Tibial artery (tissue), 4 donors: ENCODE measurements at regions of chrX and their contacts with region 1.

Region 1: GRCh38 chrX:120499301-120500072 is 30.4 kb upstream of the LAMP2 start:
- DNase-seq: no peak
- H3K4me3 ChIP-seq: no peak overlapping the region
- H3K27ac ChIP-seq: no peak overlapping the region
- H3K4me1 ChIP-seq: no peaks in the 10 kb centered on the region
- H3K27me3 ChIP-seq: no peaks in the 10 kb centered on the region
- CTCF ChIP-seq: no peak

Region 2: DNA sequence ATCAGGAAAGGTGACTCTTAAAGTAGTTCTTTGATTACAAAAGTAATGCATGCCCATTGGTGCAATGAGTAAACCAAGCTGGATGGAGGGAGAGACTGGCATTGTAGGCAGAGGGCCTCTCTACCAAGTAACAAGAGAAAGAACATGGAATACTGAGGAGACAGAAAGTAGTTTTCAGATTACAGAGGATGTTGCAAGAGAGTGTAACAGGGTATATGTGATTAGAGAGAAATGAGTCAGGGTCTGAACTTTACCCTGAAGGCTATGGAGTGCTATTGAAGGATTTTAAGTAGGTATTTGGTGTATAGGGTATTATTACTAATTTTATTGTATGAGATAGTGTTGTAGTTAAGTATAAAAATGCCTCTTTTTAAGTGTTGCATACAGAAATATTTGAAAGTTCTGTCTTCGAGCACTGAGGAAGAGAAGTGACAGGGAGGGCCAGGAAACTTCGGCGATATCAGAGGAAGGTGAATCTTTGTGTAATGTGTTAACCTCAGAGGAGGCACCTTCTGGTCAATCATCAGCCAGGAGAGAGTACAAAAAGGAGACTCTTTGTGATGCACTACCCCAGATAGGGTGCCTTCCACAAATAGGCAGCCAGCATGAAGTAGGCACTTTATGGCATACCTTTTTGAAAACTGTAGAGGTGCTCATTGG is 564.1 kb before region 1 on chrX:
- intact Hi-C with region 1: no loop called
- DNase-seq: no peak
- H3K4me3 ChIP-seq: no peak overlapping the region
- H3K27ac ChIP-seq: no peak overlapping the region
- H3K4me1 ChIP-seq: no peaks in the 10 kb centered on the region
- H3K27me3 ChIP-seq: no peaks in the 10 kb centered on the region
- CTCF ChIP-seq: no peak

Region 3: DNA sequence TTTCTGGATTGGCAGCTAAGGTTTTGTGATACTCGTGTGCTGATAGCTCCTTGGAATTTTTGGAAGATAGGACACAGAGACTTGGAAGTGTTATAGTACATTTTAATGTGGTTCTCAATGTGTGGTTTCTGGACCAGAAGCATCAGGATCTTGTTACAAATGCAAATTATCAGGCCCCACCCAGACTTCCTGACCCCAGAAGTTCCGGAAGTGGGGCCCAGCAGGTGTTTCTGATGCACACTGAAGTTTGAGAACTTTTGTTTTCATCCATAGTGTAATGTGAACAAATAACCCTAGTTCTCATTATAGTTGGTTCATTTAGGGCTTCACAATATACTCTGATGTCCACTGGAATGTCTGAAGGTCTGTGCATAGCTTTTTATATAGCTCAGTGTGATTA is 80.0 kb before region 1 on chrX:
- intact Hi-C with region 1: no loop called
- DNase-seq: no peak
- H3K4me3 ChIP-seq: no peak overlapping the region
- H3K27ac ChIP-seq: no peak overlapping the region
- H3K4me1 ChIP-seq: no peaks in the 10 kb centered on the region
- H3K27me3 ChIP-seq: no peaks in the 10 kb centered on the region
- CTCF ChIP-seq: no peak

Region 4: DNA sequence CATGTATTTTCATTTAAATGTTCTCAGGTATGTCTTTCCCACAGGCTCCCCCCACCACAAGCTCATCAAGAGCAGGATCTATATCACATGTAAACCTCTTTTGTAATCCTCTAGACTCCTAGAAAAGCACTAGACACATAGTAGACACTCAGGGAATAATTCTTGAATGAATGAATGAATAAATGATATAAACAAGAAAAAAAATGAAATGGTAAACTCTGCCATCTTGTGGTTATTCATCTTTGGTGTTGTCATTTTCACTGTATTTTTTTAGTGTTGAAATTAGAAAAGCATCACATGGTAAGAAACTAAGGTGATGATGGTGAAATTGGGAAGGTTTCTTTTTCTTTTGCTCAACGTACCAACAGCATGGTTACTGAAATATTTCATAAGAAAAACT is 164.6 kb after region 1 on chrX:
- intact Hi-C with region 1: loop called (anchors 10 kb)
- DNase-seq: no peak
- H3K4me3 ChIP-seq: no peak overlapping the region
- H3K27ac ChIP-seq: no peak overlapping the region
- H3K4me1 ChIP-seq: no peaks in the 10 kb centered on the region
- H3K27me3 ChIP-seq: no peaks in the 10 kb centered on the region
- CTCF ChIP-seq: peak in 1 of 2 experiments; percentile 7

Region 5: GRCh38 chrX:120769576-120770341 is 270.3 kb after region 1 on chrX:
- intact Hi-C with region 1: loop called (anchors 10 kb)
- DNase-seq: no peak
- H3K4me3 ChIP-seq: no peak overlapping the region
- H3K27ac ChIP-seq: no peak overlapping the region
- H3K4me1 ChIP-seq: no peaks in the 10 kb centered on the region
- H3K27me3 ChIP-seq: no peaks in the 10 kb centered on the region
- CTCF ChIP-seq: peak; percentile 18 to 30